ENCODE measurements at regions of chr1 and their contacts with region 1.

Region 1: DNA sequence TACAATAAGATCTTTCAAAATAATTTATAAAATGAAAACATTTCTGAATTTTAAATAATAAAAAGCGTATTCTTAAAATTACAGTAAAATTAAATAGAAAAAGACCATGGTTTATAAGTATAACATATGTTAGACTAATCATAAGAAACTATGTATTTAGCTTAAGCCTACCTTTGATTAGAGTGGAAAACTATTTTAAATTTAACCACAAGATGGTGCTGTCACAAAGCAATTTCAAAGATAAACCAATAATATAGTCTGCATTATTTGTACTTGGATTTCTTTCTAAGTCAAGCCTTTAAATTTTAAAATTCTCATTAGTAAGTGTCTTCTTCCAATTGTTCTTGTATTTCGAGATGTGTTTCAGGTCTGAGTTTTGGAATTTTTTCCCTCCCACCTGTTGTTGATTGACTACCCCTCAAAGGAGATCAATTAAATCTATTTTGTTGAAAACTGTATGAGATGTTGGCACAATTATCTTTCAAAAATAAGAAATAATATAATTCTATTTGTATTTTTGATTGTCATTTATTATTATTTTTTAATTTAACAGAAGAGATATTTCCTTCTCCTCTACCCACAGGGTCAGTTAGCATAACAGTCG is 459.8 kb downstream of the KCNT2 start:
- DNase-seq: no peak
- ATAC-seq: no peak
- H3K4me3 Mint-ChIP-seq: no peak overlapping the region
- H3K27ac Mint-ChIP-seq: no peak overlapping the region
- H3K4me1 Mint-ChIP-seq: peaks cover 13% of the 10 kb centered on the region
- H3K27me3 Mint-ChIP-seq: no peaks in the 10 kb centered on the region
- CTCF ChIP-seq: peak; percentile 36

Region 2: GRCh38 chr1:195939844-195940243 is 208.6 kb before region 1 on chr1:
- CTCF ChIA-PET with region 1: interaction called, 17 read pairs
- POLR2A ChIA-PET with region 1: no interaction called
- DNase-seq: peak; percentile 26
- ATAC-seq: peak; percentile 99
- H3K4me3 Mint-ChIP-seq: no peak overlapping the region
- H3K27ac Mint-ChIP-seq: peak overlapping the region; percentile 87
- H3K4me1 Mint-ChIP-seq: peaks cover 21% of the 10 kb centered on the region
- H3K27me3 Mint-ChIP-seq: no peaks in the 10 kb centered on the region
- CTCF ChIP-seq: no peak

Region 3: DNA sequence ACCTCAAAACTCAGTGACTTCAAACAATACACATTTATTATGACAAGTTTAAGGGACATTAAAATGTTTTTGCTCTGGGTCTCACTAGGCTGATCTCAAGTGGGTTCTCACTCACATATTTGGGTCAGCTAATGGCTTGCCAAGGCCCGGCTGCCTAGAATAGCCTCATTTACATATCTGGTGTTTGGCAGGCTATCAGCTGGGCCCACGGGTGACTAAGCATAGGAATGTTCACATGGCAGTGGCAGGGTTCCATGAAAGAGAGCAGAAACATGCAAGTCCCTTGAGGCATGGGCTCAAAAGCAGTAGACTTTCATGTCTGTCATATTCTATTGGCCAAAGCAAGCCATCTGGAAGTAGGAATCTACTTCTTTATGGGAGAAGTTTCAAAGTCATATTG is 32.8 kb before region 1 on chr1:
- CTCF ChIA-PET with region 1: no interaction called
- POLR2A ChIA-PET with region 1: no interaction called
- DNase-seq: peak; percentile 11
- ATAC-seq: no peak; the same call in 1 of the 2 replicates
- H3K4me3 Mint-ChIP-seq: no peak overlapping the region
- H3K27ac Mint-ChIP-seq: no peak overlapping the region
- H3K4me1 Mint-ChIP-seq: peaks cover 3% of the 10 kb centered on the region; the same call in 1 of the 2 replicates
- H3K27me3 Mint-ChIP-seq: no peaks in the 10 kb centered on the region
- CTCF ChIP-seq: no peak

Region 4: GRCh38 chr1:196309386-196309785 is 160.9 kb after region 1 on chr1:
- CTCF ChIA-PET with region 1: interaction called, 10 read pairs
- POLR2A ChIA-PET with region 1: no interaction called
- DNase-seq: no peak
- ATAC-seq: no peak
- H3K4me3 Mint-ChIP-seq: no peak overlapping the region
- H3K27ac Mint-ChIP-seq: no peak overlapping the region
- H3K4me1 Mint-ChIP-seq: peaks cover 54% of the 10 kb centered on the region
- H3K27me3 Mint-ChIP-seq: no peaks in the 10 kb centered on the region
- CTCF ChIP-seq: no peak

Region 5: DNA sequence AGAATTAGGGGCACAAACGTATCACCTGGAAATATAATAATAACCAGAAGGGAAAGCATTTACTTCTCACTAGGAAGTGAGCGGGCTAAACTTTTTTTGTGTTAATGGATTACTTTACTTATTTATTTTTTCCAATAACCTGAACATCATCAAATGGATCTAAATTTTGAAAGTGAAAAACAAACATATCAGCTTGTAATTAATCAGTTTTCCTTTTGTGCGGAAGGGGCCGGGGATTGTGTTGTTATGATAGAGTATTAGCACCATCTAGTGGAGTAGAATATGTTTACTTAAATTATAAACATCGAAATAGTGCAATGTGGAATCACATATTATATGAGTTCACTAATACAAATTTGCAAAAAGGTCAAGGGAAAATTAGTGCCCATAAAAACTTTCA is 512.4 kb after region 1 on chr1:
- CTCF ChIA-PET with region 1: interaction called, 12 read pairs
- POLR2A ChIA-PET with region 1: no interaction called
- DNase-seq: no peak
- ATAC-seq: peak; percentile 38; the same call in 1 of the 2 replicates
- H3K4me3 Mint-ChIP-seq: no peak overlapping the region
- H3K27ac Mint-ChIP-seq: no peak overlapping the region
- H3K4me1 Mint-ChIP-seq: no peaks in the 10 kb centered on the region
- H3K27me3 Mint-ChIP-seq: no peaks in the 10 kb centered on the region
- CTCF ChIP-seq: no peak; the same call in 1 of the 2 replicates